MCF 10A (cell line): ENCODE measurements at regions of chr17 and their contacts with region 1.

Region 1: GRCh38 chr17:7435221-7435675 is at the start of gene TMEM102:
- DNase-seq: peak; percentile 99
- H3K4me3 Mint-ChIP-seq: peak within 1 kb of the TSS; percentile 81
- H3K27ac Mint-ChIP-seq: peak within 1 kb of the TSS; percentile 92
- H3K4me1 Mint-ChIP-seq: peaks cover 12% of the 10 kb centered on the region
- H3K27me3 Mint-ChIP-seq: no peaks in the 10 kb centered on the region
- CTCF ChIP-seq: no peak
- total RNA-seq, gene TMEM102: 6.1 and 6.3 TPM in 2 replicates

Region 2: GRCh38 chr17:7351665-7352501 is 83.4 kb before region 1 on chr17 and contains the start of gene KCTD11:
- CTCF ChIA-PET with region 1: interaction called, 57 read pairs
- POLR2A ChIA-PET with region 1: interaction called, 76 read pairs
- intact Hi-C with region 1: loop called (anchors 1 kb)
- DNase-seq: peak; percentile 89
- H3K4me3 Mint-ChIP-seq: peak within 1 kb of the TSS; percentile 85
- H3K27ac Mint-ChIP-seq: peak within 1 kb of the TSS; percentile 93
- H3K4me1 Mint-ChIP-seq: peaks cover 17% of the 10 kb centered on the region
- H3K27me3 Mint-ChIP-seq: no peaks in the 10 kb centered on the region
- CTCF ChIP-seq: no peak
- total RNA-seq, gene KCTD11: 9.2 and 10.1 TPM in 2 replicates

Region 3: GRCh38 chr17:7403977-7404736 is 31.1 kb before region 1 on chr17 and contains the start of gene TMEM256:
- CTCF ChIA-PET with region 1: interaction called, 3 read pairs
- POLR2A ChIA-PET with region 1: interaction called, 48 read pairs
- intact Hi-C with region 1: loop called (anchors 1 kb)
- DNase-seq: peak; percentile 99
- H3K4me3 Mint-ChIP-seq: peak within 1 kb of the TSS; percentile 78
- H3K27ac Mint-ChIP-seq: peak within 1 kb of the TSS; percentile 86
- H3K4me1 Mint-ChIP-seq: peaks cover 16% of the 10 kb centered on the region
- H3K27me3 Mint-ChIP-seq: no peaks in the 10 kb centered on the region
- CTCF ChIP-seq: no peak
- total RNA-seq, gene TMEM256: 35.2 and 42.9 TPM in 2 replicates

Region 4: DNA sequence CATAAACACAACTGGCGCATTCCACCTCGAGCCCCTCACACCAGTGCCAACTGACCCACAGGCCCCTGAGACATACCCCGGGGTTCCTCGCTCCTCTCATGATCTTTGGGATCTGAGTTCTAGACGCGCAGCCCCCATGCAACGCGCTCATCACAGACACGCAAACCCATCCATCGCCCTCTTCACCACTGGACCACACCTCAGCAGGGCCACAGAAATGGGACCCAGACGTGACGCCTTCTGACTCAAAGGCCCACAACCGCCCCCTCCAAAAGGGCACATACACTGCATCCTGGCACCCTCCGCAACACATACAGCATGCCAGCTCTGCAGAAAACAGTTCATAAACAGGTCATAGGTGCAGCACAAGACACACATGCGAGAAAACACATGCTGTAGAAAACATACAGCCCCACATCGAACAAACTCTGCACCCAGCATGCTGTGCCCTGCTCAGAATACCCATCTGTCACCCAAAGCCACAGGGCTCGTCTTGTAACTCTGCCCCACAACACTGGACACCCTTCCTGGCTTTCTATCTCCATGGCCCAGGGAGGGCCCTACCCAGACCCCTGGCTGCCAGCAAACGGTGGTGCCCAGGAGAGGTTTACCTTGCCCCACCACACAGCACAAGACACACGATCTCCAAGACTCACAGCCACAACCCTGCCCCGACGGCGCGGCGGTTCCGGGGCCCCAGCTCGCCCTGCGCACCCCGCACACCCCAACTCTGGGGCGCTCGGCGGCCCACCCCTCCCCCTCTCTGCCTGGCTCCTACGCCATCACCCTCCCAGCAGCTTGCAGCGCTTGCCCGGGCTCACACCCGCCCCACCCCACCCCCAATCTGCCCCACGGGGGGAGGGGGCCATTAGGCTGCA is 43.3 kb after region 1 on chr17:
- CTCF ChIA-PET with region 1: interaction called, 21 read pairs
- POLR2A ChIA-PET with region 1: interaction called, 115 read pairs
- intact Hi-C with region 1: no loop called
- DNase-seq: no peak
- H3K4me3 Mint-ChIP-seq: peak overlapping the region; percentile 84
- H3K27ac Mint-ChIP-seq: peak overlapping the region; percentile 20
- H3K4me1 Mint-ChIP-seq: peaks cover 43% of the 10 kb centered on the region
- H3K27me3 Mint-ChIP-seq: no peaks in the 10 kb centered on the region
- CTCF ChIP-seq: no peak

Region 5: GRCh38 chr17:7515911-7516610 is 80.8 kb after region 1 on chr17:
- CTCF ChIA-PET with region 1: interaction called, 18 read pairs
- POLR2A ChIA-PET with region 1: interaction called, 4 read pairs
- intact Hi-C with region 1: no loop called
- DNase-seq: no peak
- H3K4me3 Mint-ChIP-seq: no peak overlapping the region
- H3K27ac Mint-ChIP-seq: no peak overlapping the region
- H3K4me1 Mint-ChIP-seq: no peaks in the 10 kb centered on the region
- H3K27me3 Mint-ChIP-seq: no peaks in the 10 kb centered on the region
- CTCF ChIP-seq: no peak

Region 6: DNA sequence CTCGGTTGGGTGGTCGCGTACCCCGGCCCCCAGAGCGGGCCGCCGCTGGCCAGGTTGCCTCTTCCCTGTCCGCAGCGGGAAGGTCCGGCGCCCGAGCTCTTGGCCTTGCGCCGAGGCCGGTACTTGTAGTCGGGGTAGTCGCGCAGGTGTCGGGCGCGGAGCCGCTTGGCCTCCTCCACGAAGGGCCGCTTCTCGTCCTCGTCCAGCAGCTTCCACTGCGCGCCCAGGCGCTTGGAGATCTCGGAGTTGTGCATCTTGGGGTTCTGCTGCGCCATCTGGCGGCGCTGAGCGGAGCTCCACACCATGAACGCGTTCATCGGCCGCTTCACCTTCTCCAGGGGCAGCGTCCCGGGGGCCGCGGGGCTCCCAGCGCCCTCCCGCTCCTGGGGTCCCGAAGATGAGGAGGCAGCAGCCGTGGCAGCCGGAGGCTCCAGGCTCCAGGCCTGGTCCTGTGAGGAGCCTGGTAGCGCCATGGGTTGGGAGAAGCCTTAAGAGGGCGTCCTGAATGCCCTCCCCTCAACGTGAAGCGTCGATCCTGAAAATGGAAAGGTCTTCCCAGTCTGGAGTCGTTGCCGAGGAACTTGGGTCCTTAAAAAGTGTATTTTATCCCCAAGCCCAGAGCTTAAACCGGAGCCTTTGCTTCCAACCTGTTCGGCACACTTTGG is 154.1 kb after region 1 on chr17:
- CTCF ChIA-PET with region 1: interaction called, 4 read pairs
- POLR2A ChIA-PET with region 1: interaction called, 20 read pairs
- intact Hi-C with region 1: no loop called
- DNase-seq: peak; percentile 92
- H3K4me3 Mint-ChIP-seq: peak overlapping the region; percentile 76
- H3K27ac Mint-ChIP-seq: peak overlapping the region; percentile 78
- H3K4me1 Mint-ChIP-seq: peaks cover 42% of the 10 kb centered on the region
- H3K27me3 Mint-ChIP-seq: no peaks in the 10 kb centered on the region
- CTCF ChIP-seq: peak; percentile 88

Region 7: DNA sequence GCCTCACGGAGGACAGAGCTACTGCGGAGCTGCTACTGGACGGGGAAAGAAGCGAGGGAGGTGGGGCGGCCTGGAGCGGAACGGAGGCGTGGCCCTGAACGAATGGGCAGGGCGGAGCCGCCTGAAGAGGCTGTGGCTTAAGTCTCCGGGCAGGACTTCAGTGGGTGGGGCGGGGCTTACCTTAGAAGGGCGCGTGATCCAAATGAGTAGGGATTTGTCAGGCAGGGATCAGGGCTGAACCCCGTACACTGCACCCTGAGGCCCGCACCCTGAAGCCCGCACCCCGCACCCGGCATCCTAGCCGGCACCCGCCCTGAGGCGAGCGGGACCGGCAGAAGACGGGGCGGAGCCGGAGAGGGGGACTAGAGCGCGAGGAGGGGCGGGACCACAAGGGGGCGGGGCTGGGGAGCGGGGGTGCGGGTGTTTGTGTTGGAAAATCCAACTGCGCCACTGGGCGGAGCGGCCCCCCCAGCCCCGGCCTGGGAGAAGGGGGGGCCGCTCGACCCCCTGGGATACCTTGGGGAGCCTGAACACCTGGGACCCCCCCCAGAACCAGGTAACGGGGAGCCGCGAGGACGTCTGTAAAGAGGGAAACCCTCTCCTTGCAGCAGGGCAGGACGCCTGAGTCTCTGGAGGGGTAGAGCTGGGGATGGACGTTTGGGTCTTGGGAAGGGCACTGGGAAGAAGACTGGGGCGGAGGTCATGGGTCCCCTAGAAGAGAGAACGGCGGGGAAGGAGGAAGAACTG is 398.7 kb after region 1 on chr17 and contains the start of gene KDM6B:
- CTCF ChIA-PET with region 1: no interaction called
- POLR2A ChIA-PET with region 1: no interaction called
- intact Hi-C with region 1: no loop called
- DNase-seq: peak; percentile 92
- H3K4me3 Mint-ChIP-seq: peak within 1 kb of the TSS; percentile 89
- H3K27ac Mint-ChIP-seq: peak within 1 kb of the TSS; percentile 99
- H3K4me1 Mint-ChIP-seq: peaks cover 34% of the 10 kb centered on the region
- H3K27me3 Mint-ChIP-seq: peaks cover 8% of the 10 kb centered on the region
- CTCF ChIP-seq: no peak
- total RNA-seq, gene KDM6B: 37.9 and 39.8 TPM in 2 replicates